ENCODE measurements at regions of chr19 and their contacts with region 1.

Region 1: DNA sequence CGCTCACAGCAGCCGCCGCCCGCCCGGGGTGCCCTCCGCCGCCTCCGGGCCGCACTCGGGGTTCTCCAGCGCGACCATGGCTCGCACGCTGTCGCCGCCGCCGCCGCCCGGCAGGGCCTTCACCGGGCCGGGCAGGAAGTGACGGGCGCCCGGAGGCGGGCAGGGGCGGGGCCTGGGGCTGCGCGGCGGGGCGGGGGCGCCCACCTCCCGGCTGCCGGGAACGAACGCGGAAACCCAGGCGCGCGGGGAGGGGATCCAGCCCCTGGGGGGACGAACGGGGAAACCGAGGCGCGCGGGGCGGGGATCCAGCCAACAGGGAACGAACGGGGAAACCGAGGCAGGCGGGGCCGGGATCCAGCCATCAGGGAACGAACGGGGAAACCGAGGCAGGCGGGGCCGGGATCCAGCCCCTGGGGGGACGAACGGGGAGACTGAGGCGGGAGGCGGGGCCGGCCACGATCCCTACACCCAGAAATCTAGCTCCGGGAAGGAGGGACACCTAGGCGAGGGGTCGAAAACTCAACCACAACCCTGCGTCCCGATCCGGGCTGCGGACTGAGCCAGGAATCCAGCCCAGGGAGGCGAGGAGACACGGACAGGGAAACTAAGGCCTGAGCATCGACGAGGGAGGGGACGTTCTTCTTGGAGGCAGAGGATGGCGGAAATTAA is at the start of gene R3HDM4:
- DNase-seq: peak; percentile 38
- H3K4me3 ChIP-seq: peak within 1 kb of the TSS; percentile 59 to 98 (median 91)
- H3K27ac ChIP-seq: peak within 1 kb of the TSS; percentile 40
- H3K4me1 ChIP-seq: peaks cover 10% of the 10 kb centered on the region
- H3K27me3 ChIP-seq: peaks cover 9 to 13% of the 10 kb centered on the region in 2 experiments
- CTCF ChIP-seq: no peak
- POLR2A ChIP-seq: peak; percentile 47
- total RNA-seq, gene R3HDM4: 49.6 and 53.9 TPM in 2 replicates

Region 2: DNA sequence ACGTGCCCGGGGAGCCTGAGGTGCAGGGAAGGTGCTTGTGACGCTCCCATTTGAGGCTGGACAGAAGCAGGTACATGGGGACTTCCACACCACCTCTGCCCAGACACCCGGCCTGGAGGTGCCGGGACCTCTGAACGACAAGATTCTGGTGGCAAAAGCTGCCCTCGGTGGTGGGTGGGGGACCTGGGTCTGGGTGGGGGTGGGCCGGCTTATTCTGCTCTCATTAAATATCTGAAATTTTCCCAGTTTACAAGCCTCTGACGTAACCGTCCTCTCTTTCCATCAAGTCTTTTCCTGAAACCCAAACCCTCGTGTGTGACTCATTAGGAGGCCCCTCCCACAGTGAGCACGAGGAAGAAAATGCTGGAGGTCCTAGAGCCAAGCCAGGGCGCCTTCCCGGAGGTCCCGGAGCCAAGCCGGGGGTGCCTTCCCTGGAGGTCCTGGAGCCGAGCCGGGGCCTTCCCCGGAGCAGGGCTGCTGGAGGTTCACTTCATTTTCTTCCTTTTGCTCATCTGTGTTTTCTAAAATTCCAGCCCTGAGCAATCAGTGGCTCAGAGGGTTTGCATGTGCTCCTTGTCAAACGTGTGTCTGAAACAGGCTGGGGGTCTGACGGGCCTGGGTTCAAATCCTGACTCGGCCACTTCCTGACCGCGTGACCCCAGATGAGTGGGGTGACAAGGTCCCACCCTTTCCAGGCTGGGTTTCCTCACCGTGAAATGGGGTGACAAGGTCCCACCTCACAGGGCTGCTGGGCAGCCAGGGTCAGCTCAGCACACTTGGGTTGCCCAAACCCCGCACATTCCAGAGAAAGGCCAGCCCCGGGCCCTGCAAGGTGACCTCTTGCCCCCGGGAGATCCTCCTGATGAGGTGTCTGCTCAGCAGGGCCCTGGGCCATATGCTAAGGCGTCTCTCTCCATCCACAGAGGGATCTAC is 43.7 kb before region 1 on chr19:
- CTCF ChIA-PET with region 1: no interaction called
- POLR2A ChIA-PET with region 1: no interaction called
- dilution Hi-C with region 1: no loop called
- intact Hi-C with region 1: loop called (anchors 1 kb)
- DNase-seq: peak; percentile 88
- H3K4me3 ChIP-seq: no peak overlapping the region
- H3K27ac ChIP-seq: peak overlapping the region; percentile 44
- H3K4me1 ChIP-seq: peaks cover 9% of the 10 kb centered on the region
- H3K27me3 ChIP-seq: no peaks in the 10 kb centered on the region
- CTCF ChIP-seq: no peak
- POLR2A ChIP-seq: no peak

Region 3: GRCh38 chr19:892243-893050 is 20.8 kb before region 1 on chr19:
- CTCF ChIA-PET with region 1: no interaction called
- POLR2A ChIA-PET with region 1: no interaction called
- dilution Hi-C with region 1: no loop called
- intact Hi-C with region 1: loop called (anchors 2 kb)
- DNase-seq: no peak
- H3K4me3 ChIP-seq: peak overlapping the region; percentile 54 to 91 (median 66)
- H3K27ac ChIP-seq: peak overlapping the region; percentile 64
- H3K4me1 ChIP-seq: no peaks in the 10 kb centered on the region
- H3K27me3 ChIP-seq: no peaks in the 10 kb centered on the region
- CTCF ChIP-seq: no peak
- POLR2A ChIP-seq: no peak